ENCODE measurements at regions of chr3 and their contacts with region 1.

Region 1: DNA sequence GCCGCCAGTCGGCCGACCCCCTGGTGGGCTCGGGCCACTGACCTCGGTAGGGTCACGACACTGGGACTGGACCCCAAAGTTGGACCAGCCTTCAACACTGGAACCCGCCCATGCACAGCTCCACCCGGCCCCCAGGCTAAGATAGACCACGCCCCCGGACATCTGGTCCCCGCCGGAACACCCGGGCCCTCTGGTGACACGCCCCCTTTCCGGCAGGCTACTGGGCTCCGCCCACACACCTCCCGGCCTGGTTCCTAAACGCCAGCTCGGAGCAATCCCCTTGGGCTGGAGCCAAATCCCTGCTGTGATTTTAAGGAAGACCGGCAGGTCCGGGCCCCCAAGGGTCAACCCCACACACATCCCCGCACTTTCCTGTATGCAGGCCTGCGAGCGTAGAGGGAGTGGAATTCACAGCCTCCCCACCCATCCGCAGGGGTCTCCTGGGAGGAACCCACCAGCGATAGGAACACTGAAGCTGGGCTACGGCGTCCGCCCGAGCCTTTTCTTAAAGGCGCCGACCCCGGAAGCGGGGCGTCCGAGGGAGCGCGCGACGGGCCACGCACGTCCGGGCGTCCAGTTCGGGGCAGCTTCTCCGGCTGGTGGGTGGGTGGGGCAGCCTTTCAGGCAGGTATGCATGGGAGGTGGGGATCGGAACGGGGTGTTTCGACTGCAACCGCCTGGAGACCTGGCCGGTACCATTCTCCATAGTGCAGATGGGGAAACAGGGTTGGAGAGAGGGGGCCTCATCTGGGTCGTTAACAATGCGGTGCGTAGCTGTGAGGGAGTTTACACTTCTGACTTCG is at the start of gene HEMK1:
- DNase-seq: peak; percentile 94
- ATAC-seq: peak; percentile 79
- H3K4me3 ChIP-seq: peak within 1 kb of the TSS; percentile 90 to 99
- H3K27ac ChIP-seq: peak within 1 kb of the TSS; percentile 54
- H3K4me1 ChIP-seq: peaks cover 15 to 40% of the 10 kb centered on the region in 2 experiments
- H3K27me3 ChIP-seq: no peaks in the 10 kb centered on the region
- CTCF ChIP-seq: no peak
- POLR2A ChIP-seq: no peak
- RAD21 ChIP-seq: no peak
- total RNA-seq, gene HEMK1: 20.5 TPM

Region 2: DNA sequence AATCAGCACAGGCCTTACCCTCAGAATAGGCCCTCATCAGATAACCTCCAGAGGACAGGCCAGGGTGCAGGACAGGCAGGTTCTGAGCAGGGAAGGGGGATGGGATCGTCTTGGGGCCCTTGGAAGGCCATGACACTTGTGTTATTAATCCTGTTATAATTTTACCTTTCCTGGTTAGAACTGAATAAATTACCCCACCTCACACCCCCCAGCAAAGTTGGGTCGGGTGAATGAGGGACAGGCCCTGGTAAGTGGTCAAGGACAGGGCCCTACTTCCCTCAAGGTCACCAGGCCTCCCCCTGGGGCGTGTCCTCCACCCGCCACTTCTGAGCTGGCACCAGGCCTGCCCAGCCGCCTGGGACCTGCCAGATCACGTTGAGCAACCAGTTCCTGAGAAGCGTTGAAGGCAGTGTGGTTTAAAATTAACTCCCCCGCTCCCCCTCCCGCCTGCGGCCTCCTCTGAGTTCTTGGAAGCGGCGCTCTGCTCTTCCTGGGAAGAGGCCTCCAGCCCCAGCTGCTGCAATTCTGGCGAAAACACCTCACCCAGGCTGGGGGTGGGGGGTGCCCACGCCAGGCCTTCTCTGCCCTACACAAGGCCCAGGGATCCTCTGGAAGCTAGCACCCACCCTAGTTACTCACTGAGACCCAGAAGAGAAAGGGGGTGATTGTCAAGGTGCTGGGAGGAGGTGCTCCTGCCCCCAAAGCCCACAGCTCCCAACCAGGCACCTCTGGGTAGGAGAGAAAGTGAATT is 31.9 kb after region 1 on chr3:
- CTCF ChIA-PET with region 1: interaction called, 5 read pairs
- POLR2A ChIA-PET with region 1: interaction called, 5 read pairs
- RAD21 ChIA-PET with region 1: interaction called in 1 of 2 experiments, 3 read pairs
- intact Hi-C with region 1: loop called (anchors 1 kb)
- DNase-seq: peak; percentile 77
- ATAC-seq: peak; percentile 81
- H3K4me3 ChIP-seq: peak overlapping the region; percentile 25 to 35
- H3K27ac ChIP-seq: peak overlapping the region; percentile 98
- H3K4me1 ChIP-seq: peaks cover 37 to 40% of the 10 kb centered on the region in 2 experiments
- H3K27me3 ChIP-seq: no peaks in the 10 kb centered on the region
- CTCF ChIP-seq: no peak
- POLR2A ChIP-seq: no peak
- RAD21 ChIP-seq: no peak

Region 3: GRCh38 chr3:51622868-51623267 is 1053.7 kb after region 1 on chr3:
- CTCF ChIA-PET with region 1: no interaction called
- POLR2A ChIA-PET with region 1: no interaction called
- RAD21 ChIA-PET with region 1: no interaction called
- intact Hi-C with region 1: no loop called
- DNase-seq: no peak
- ATAC-seq: no peak
- H3K4me3 ChIP-seq: no peak overlapping the region
- H3K27ac ChIP-seq: no peak overlapping the region
- H3K4me1 ChIP-seq: no peaks in the 10 kb centered on the region; a peak in 1 of 4 replicates
- H3K27me3 ChIP-seq: no peaks in the 10 kb centered on the region
- CTCF ChIP-seq: no peak
- POLR2A ChIP-seq: no peak
- RAD21 ChIP-seq: no peak

Measured in HCT116 (cell line).